Spleen (tissue), 13 donors: ENCODE measurements at regions of chr6 and their contacts with region 1.

Region 1: GRCh38 chr6:38493931-38494547 is 145.7 kb downstream of the BTBD9 start:
- DNase-seq: peak; percentile 82
- H3K4me3 ChIP-seq: no peak overlapping the region
- H3K27ac ChIP-seq: no peak overlapping the region
- H3K4me1 ChIP-seq: peaks cover 0 to 23% (median 3%) of the 10 kb centered on the region in 6 donors
- H3K27me3 ChIP-seq: no peaks in the 10 kb centered on the region
- CTCF ChIP-seq: peak; percentile 78 to 93 (median 87)
- POLR2A ChIP-seq: no peak

Region 2: GRCh38 chr6:37705239-37706051 is 788.6 kb before region 1 on chr6:
- intact Hi-C with region 1: loop called (anchors 10 kb)
- DNase-seq: peak; percentile 90
- H3K4me3 ChIP-seq: peak overlapping the region; percentile 41 to 78 (median 44)
- H3K27ac ChIP-seq: peak overlapping the region; percentile 20 to 82 (median 62)
- H3K4me1 ChIP-seq: peaks cover 5 to 31% (median 12%) of the 10 kb centered on the region in 6 donors
- H3K27me3 ChIP-seq: peaks cover 0 to 15% (median 0%) of the 10 kb centered on the region in 7 donors
- CTCF ChIP-seq: peak; percentile 35 to 79 (median 55)
- POLR2A ChIP-seq: no peak

Region 3: GRCh38 chr6:37791156-37791919 is 702.7 kb before region 1 on chr6:
- intact Hi-C with region 1: loop called (anchors 5 kb)
- DNase-seq: peak; percentile 93
- H3K4me3 ChIP-seq: no peak overlapping the region
- H3K27ac ChIP-seq: no peak overlapping the region
- H3K4me1 ChIP-seq: peaks cover 0 to 12% (median 9%) of the 10 kb centered on the region in 6 donors
- H3K27me3 ChIP-seq: no peaks in the 10 kb centered on the region
- CTCF ChIP-seq: peak; percentile 83 to 99 (median 92)
- POLR2A ChIP-seq: no peak